GM18951 (cell line): ENCODE measurements at regions of chr18 and their contacts with region 1.

Region 1: DNA sequence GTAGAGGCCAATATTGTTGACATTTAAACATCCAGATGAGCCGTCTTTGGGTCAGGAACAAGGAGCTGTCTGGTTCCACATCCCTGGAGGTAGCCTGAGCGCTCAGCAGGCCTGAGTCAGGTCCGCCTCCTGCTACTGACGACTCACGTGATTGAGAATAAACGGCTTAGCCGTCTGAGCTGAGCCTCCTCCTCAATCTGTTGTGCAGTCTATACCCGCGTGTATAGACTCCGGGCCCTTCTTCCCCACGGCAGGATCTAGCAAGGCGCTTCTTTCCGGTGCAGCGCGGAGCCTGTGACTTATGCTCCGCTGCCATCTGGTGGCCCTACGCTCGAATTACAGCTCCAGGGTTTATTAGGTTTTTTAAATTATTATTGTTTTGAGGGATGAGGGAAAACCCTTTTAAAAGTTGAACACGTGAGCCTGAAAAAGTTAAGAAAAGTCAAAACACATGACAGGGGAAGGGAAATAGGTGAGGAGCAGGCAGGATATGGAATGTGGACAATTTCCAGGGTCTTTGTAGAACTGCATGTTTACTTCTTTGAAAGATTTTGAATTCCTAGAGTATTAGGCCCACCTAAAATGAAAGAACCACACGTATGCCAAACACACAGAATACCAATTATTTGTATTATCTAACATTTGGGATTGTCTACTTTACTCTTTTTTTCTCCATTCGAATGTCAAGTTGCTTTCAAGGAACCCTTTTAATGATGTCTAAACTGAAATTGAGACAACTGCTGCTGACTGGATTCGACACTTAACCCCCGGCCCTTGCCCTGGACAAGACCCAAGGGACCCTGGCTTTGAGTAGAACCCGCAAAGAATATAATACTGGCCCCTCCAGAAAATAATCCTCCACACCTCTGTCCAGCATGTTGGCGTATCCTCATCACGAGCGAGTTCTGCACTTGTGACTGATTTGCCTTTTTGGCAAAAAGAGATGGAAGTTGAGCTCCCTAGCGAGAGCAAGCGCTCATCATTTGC is 112.4 kb upstream of the ZNF236 start:
- POLR2A ChIP-seq: no peak

Region 2: DNA sequence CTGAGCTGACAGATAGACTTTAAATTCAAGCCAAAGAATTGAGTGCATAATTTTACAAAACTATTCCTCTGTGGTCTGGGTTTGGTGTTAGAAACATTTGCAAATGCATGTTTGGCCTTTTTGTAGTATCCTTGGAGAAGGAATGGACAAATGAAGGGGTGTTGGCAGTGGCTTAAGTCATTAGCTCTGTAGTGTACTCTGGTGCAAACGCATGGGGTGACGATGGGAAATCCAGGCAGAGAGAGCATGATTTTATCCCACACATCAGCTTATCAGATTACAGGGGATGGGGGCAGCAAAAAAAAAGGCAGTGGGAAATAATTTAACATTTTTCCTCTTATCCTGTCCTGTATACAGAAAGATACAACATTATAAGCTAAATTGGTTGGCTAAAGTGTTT is 535.5 kb before region 1 on chr18:
- in situ Hi-C with region 1: no loop called
- POLR2A ChIP-seq: no peak

Region 3: DNA sequence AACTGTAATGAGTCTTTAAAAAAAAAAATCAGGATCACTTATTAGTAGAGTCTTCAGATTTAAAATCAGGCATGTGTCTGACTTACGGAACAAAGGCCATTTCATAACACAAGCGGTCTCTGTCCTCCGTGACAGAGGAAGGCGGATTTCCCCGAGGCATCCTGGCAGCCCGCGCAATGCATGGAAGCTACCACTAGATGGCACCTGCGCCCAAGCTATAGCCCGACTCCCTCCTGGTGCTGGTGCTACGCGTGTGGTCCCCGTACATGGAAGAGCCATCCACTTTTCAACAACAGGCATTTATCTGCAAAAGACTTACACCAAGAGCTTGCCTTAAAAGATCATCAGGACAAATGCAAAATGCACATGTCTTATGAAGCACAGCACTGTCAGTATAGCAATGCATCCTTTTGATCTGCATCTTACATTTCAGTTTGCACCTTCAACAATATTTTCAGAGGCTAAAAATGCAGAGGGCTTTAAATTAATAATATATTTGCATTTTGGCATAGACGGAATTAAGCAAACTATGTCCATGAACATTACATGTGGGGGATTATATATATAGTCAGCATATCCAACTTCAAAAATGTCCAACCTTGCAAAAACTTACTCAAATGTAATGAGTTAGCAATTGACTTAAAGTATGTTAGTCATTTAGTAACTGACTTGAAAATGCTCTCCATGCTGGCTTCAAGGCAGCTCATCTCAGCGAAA is 310.9 kb before region 1 on chr18:
- in situ Hi-C with region 1: loop called (anchors 25 kb)
- POLR2A ChIP-seq: no peak